Panc1 (cell line): ENCODE measurements at regions of chr2 and their contacts with region 1.

Region 1: GRCh38 chr2:58571181-58571852 is 330.2 kb upstream of the FANCL start:
- DNase-seq: peak; percentile 80
- ATAC-seq: peak; percentile 99
- H3K4me3 ChIP-seq: no peak overlapping the region
- H3K27ac ChIP-seq: no peak overlapping the region
- H3K4me1 ChIP-seq: no peaks in the 10 kb centered on the region; the same call in 1 of the 2 replicates
- H3K27me3 ChIP-seq: no peaks in the 10 kb centered on the region; the same call in 1 of the 2 replicates
- CTCF ChIP-seq: peak; percentile 84

Region 2: DNA sequence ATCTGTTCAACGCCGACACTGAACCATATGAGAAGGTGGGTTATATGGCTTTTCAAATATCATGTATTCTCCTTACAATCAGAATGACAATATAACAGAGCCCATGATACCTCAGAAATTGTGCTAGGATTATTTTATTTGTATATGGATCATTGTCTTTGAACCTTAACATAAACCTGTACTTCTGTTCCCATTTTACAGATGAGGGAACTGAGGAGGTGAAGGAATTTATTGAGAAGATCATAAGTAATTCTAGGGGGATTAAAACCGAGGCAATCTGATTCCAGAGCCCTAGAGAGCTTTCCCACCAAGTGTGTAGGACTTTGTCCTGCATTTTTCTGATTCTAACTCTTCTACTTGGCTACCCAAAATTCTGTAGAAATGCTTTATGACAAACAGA is 50.4 kb before region 1 on chr2:
- CTCF ChIA-PET with region 1: no interaction called
- POLR2A ChIA-PET with region 1: interaction called, 11 read pairs
- in situ Hi-C with region 1: no loop called
- intact Hi-C with region 1: no loop called
- DNase-seq: no peak
- ATAC-seq: no peak
- H3K4me3 ChIP-seq: no peak overlapping the region
- H3K27ac ChIP-seq: no peak overlapping the region
- H3K4me1 ChIP-seq: no peaks in the 10 kb centered on the region
- H3K27me3 ChIP-seq: no peaks in the 10 kb centered on the region
- CTCF ChIP-seq: no peak

Region 3: GRCh38 chr2:58680755-58681310 is 109.5 kb after region 1 on chr2:
- CTCF ChIA-PET with region 1: interaction called, 6 read pairs
- POLR2A ChIA-PET with region 1: no interaction called
- in situ Hi-C with region 1: no loop called
- intact Hi-C with region 1: loop called (anchors 2 kb)
- DNase-seq: no peak
- ATAC-seq: no peak
- H3K4me3 ChIP-seq: no peak overlapping the region
- H3K27ac ChIP-seq: no peak overlapping the region
- H3K4me1 ChIP-seq: no peaks in the 10 kb centered on the region
- H3K27me3 ChIP-seq: no peaks in the 10 kb centered on the region
- CTCF ChIP-seq: no peak; the same call in 1 of the 2 replicates

Region 4: GRCh38 chr2:58762176-58762781 is 191.0 kb after region 1 on chr2:
- CTCF ChIA-PET with region 1: no interaction called
- POLR2A ChIA-PET with region 1: no interaction called
- in situ Hi-C with region 1: no loop called
- intact Hi-C with region 1: loop called (anchors 2 kb)
- DNase-seq: peak; percentile 33
- ATAC-seq: peak; percentile 92
- H3K4me3 ChIP-seq: no peak overlapping the region
- H3K27ac ChIP-seq: no peak overlapping the region
- H3K4me1 ChIP-seq: no peaks in the 10 kb centered on the region
- H3K27me3 ChIP-seq: no peaks in the 10 kb centered on the region; the same call in 1 of the 2 replicates
- CTCF ChIP-seq: peak; percentile 78